ENCODE measurements at regions of chr11 and their contacts with region 1.

Region 1: GRCh38 chr11:65477149-65477965 is 21.5 kb upstream of the MALAT1 start:
- DNase-seq: peak; percentile 90
- H3K4me3 ChIP-seq: peak overlapping the region; percentile 88
- H3K27ac ChIP-seq: peak overlapping the region; percentile 78
- H3K4me1 ChIP-seq: peaks cover 31% of the 10 kb centered on the region
- CTCF ChIP-seq: no peak

Region 2: DNA sequence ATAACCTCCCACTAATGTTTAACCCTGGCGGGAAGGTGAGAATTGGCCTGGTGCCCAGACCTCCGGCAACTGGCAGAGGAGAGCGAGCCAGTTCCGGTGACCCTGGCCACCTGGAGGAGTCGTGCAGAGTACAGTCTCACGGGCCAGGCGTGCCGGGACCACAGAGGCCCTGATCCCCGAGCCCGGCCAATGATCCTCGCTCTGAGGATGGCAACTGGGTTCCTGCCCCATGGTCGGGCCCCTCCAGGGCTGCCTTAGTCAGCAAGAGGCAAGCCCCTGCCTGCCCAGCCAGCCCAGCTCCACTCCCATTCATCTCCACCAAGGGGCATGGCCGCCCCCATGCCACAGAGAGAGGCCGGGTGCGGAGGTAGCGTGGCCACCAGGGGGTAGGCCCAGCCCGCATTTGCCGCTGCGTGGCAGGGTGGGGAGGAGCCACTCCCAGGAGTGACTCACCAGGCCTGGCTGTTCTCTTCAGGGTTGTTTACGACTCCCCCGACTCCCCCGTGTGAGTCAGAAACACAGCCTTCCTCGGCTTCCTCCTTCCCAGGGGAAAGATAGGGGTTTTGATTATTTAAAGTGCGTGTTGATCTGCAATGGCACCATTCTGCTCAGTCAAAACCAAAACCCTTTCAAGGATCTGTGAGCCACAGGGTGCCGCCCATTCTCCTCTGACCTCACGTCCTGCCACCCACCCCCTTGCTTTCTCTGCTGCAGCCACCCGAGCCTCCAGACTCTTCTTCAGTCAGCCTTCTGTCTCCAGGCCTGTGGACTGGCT is 95.1 kb before region 1 on chr11 and contains the start of gene SLC25A45:
- CTCF ChIA-PET with region 1: no interaction called
- POLR2A ChIA-PET with region 1: interaction called, 6 read pairs
- intact Hi-C with region 1: loop called (anchors 2 kb)
- DNase-seq: peak; percentile 86
- H3K4me3 ChIP-seq: peak within 1 kb of the TSS; percentile 68
- H3K27ac ChIP-seq: peak within 1 kb of the TSS; percentile 52
- H3K4me1 ChIP-seq: peaks cover 51% of the 10 kb centered on the region
- CTCF ChIP-seq: peak; percentile 84
- total RNA-seq, gene SLC25A45: 5.9 and 7.0 TPM in 2 replicates

Region 3: GRCh38 chr11:65487413-65488272 is 10.3 kb after region 1 on chr11:
- CTCF ChIA-PET with region 1: interaction called, 15 read pairs
- POLR2A ChIA-PET with region 1: interaction called, 108 read pairs
- intact Hi-C with region 1: no loop called
- DNase-seq: peak; percentile 80
- H3K4me3 ChIP-seq: peak overlapping the region; percentile 37
- H3K27ac ChIP-seq: peak overlapping the region; percentile 65
- H3K4me1 ChIP-seq: peaks cover 62% of the 10 kb centered on the region
- CTCF ChIP-seq: peak; percentile 71

Region 4: GRCh38 chr11:65497141-65498041 is 20.0 kb after region 1 on chr11:
- CTCF ChIA-PET with region 1: interaction called, 15 read pairs
- POLR2A ChIA-PET with region 1: interaction called, 121 read pairs
- intact Hi-C with region 1: loop called (anchors 1 kb)
- DNase-seq: peak; percentile 99
- H3K4me3 ChIP-seq: peak overlapping the region; percentile 79
- H3K27ac ChIP-seq: peak overlapping the region; percentile 98
- H3K4me1 ChIP-seq: peaks cover 52% of the 10 kb centered on the region
- CTCF ChIP-seq: no peak

Region 5: GRCh38 chr11:65506770-65507505 is 29.6 kb after region 1 on chr11:
- CTCF ChIA-PET with region 1: no interaction called
- POLR2A ChIA-PET with region 1: interaction called, 12 read pairs
- intact Hi-C with region 1: loop called (anchors 1 kb)
- DNase-seq: peak; percentile 71
- H3K4me3 ChIP-seq: peak overlapping the region; percentile 79
- H3K27ac ChIP-seq: peak overlapping the region; percentile 98
- H3K4me1 ChIP-seq: peaks cover 65% of the 10 kb centered on the region
- CTCF ChIP-seq: no peak

Measured in OCI-LY7 (cell line).